ENCODE measurements at regions of chr1 and their contacts with region 1.

Region 1: GRCh38 chr1:31944205-31945089 is 6.3 kb upstream of the PTP4A2 start:
- DNase-seq: peak in 9 of 10 donors; percentile 6 to 59 (median 45)
- H3K4me3 ChIP-seq: peak overlapping the region; percentile 34 to 70 (median 55)
- H3K27ac ChIP-seq: peak overlapping the region; percentile 10 to 95 (median 86)
- H3K27me3 ChIP-seq: no peaks in the 10 kb centered on the region
- CTCF ChIP-seq: peak in 5 of 56 donors; percentile 3 to 13 (median 10)

Region 2: GRCh38 chr1:31795801-31796621 is 148.4 kb before region 1 on chr1:
- intact Hi-C with region 1: loop called in 1 of 2 experiments (anchors 5 kb)
- DNase-seq: peak in 8 of 10 donors; percentile 23 to 77 (median 54)
- H3K4me3 ChIP-seq: no peak overlapping the region
- H3K27ac ChIP-seq: peak overlapping the region in 20 of 59 donors; percentile 1 to 62 (median 36)
- H3K27me3 ChIP-seq: no peaks in the 10 kb centered on the region
- CTCF ChIP-seq: peak in 2 of 56 donors; percentile 8 to 10

Measured in dorsolateral prefrontal cortex (tissue), 120 donors.